Activated T-helper 2 cell treated with anti-CD3 and anti-CD28 coated beads, Interferon-gamma antibody, Interleukin-2, Interleukin-4, amounts not matched to agents 10 μg/mL and 5 μg/mL and 100 μg/mL, durations not matched to agents 14 hours and 24 hours and 36 hours (primary cell): ENCODE measurements at regions of chr21 and their contacts with region 1.

Region 1: DNA sequence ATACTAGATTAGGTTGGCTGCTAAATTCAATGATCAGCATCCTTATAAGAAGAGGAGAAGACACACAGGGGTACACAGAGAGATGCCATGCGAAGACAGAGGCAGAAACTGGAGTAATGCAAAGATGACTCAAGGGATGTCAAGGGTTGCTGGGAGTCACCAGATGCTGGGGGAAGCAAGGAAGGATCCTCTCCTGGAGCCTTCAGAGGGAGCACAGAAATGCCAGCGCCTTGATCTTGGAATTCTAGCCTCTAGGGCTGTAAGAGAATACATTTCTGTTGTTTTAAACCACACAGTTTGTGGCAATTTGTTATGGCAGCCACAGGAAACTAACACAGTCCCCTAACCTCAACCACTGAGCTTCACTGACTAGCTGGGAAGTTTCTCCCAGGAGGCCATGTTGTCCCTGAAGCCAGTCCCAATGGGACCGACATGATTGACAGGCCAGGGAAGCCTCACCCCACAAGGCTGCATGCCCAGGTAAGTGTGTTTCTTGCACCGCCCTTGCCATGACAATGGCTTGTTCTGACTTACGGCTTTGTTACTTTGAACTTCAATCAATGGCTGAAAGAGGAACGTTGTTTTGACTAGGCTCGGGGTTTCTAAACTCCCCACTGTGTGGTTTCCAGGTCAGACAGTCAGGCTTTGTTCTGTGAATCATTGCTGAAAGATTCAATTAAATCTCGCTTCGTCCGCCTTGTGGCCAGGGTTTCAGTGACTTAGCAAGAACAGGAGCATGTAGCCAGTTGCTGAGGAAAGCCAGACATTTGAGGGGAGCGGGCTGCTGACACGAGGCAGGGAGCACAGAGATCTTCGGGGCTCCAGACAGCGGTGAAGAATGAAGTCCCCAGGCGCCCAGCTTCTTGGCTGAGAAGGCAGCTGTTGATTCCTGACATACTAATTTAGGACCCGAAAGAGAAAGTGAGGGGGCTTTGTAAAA is 62.3 kb downstream of the RUNX1 start:
- DNase-seq: peak; percentile 66
- H3K4me3 Mint-ChIP-seq: peak overlapping the region; percentile 75
- H3K27ac Mint-ChIP-seq: peak overlapping the region; percentile 94
- H3K4me1 Mint-ChIP-seq: peaks cover 87% of the 10 kb centered on the region
- H3K27me3 Mint-ChIP-seq: no peaks in the 10 kb centered on the region

Region 2: DNA sequence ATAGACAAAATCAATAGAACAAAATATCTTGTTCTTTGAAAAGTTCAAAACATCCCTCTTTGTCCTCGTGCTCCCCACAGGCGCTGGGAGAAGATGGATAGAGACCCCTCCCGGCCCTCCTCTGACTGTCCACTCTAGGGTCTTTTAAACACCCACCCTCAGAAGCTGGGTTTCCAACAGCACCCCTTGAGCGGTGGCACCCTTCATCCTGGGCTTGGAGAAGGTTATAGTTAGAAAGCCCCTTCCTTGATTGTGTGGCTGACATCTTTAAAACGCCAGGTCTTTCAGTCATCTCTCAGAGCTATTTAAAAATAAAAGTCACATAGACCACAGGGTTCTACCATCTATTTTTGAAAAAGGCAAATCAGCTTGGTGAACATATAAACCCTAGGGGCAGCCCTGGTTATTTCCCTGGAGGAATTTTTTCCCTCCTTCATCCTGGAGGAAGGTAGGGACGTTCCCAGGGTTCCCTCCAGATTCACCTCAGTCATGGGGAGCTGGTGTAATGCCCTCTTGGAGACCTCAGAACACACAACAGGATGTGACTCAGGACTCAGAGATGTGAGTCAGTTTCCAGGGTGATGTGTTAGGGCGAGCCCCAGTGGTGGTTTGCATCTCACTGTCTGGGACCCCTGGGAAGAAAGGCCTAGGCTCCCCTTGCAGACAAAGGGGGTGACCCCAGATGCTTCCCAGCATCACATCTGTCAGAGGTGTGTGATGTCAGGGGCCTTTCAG is 179.5 kb before region 1 on chr21:
- intact Hi-C with region 1: loop called (anchors 10 kb)
- DNase-seq: peak; percentile 44
- H3K4me3 Mint-ChIP-seq: no peak overlapping the region
- H3K27ac Mint-ChIP-seq: peak overlapping the region; percentile 89
- H3K4me1 Mint-ChIP-seq: peaks cover 83% of the 10 kb centered on the region
- H3K27me3 Mint-ChIP-seq: no peaks in the 10 kb centered on the region

Region 3: DNA sequence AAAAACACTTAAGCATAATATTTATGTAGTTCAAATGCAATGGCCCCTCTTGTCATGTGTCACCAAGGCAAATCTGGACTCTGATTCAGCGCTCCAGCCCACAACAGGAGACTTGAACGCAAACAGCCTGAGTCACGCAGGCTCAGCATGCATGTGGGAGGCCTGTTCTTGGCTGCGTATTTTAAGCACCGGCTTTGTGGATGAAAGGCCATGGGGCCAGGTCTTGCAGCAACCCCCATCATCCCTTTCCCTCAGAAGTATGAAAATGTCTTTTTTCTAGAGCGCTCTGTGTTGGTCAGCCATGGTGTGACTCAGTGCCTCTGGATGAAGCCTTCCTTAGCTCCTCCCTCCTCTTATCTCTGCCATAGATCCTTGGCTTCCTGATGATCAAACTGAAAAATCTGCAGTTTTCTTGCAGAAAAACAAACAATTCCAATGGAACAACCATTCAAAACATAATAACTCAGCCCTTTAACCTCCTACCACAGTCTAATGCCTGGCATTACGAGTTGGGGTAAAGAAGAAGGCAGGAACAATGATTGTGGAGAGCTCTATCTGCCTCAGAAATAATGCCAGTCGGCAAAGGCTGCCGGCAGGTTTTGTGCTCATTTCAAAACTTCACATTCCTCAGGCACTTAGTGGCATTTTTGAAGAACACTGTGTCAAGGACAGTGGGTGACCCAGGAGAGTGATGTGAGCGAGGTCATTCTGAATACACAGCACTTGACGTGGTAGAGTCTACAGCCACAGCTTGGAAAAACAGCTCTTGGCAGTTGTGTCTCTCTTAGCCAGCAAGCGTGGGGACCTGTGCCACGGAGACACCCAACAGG is 150.5 kb before region 1 on chr21:
- intact Hi-C with region 1: no loop called
- DNase-seq: no peak
- H3K4me3 Mint-ChIP-seq: no peak overlapping the region
- H3K27ac Mint-ChIP-seq: peak overlapping the region; percentile 79
- H3K4me1 Mint-ChIP-seq: peaks cover 52% of the 10 kb centered on the region
- H3K27me3 Mint-ChIP-seq: no peaks in the 10 kb centered on the region

Region 4: DNA sequence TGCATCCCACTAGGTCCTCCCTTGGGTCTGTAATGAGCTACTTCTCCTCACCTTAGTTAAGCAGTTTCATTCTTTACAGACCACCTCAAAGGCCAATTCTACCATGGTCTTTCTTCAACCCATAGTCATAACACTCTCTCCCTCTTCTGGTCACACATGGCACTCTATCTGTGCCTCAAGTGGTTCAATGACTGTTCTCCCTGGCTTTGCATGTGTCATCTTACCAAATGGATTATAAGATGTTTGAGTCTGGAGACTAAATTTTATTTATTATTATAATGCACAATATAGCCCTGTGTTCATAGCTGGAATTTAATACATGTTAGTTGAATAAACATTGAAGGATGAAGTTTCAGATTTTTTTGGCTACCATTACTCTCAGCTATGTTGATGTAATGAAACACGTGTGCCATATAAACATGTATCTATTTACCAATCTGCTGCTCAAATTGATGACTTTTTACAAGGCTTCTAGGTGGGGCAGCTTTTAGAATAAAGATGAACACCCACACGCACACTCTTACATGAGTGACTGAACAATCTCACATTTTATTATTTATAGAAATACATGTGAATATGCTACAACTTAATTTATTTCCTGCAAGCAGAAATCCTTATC is 39.8 kb before region 1 on chr21:
- intact Hi-C with region 1: loop called (anchors 1 kb)
- DNase-seq: no peak
- H3K4me3 Mint-ChIP-seq: no peak overlapping the region
- H3K27ac Mint-ChIP-seq: peak overlapping the region; percentile 83
- H3K4me1 Mint-ChIP-seq: peaks cover 80% of the 10 kb centered on the region
- H3K27me3 Mint-ChIP-seq: no peaks in the 10 kb centered on the region

Region 5: GRCh38 chr21:35002879-35003722 is 16.3 kb after region 1 on chr21:
- intact Hi-C with region 1: loop called (anchors 1 kb)
- DNase-seq: no peak
- H3K4me3 Mint-ChIP-seq: no peak overlapping the region
- H3K27ac Mint-ChIP-seq: peak overlapping the region; percentile 66
- H3K4me1 Mint-ChIP-seq: peaks cover 81% of the 10 kb centered on the region
- H3K27me3 Mint-ChIP-seq: no peaks in the 10 kb centered on the region

Region 6: DNA sequence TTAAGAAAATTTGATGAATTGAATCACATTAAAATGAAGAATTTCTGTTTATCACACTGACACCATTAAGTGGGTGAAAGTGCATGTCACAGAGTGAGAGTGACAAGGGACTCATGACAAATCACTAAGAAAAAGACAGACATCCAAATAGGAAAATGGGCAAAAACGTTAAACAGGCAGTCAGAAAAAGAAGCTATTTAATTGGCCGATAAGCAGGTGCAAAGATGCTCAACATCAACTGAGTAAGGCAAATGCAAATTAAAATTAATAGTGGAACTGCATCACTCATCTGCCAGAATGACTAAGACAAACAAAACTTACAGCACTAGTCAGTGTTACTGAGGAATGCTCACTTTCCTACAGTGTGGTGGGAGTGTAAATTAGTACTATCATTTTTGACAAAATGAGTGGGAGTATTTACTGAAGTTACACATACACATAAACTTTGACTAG is 101.5 kb after region 1 on chr21:
- intact Hi-C with region 1: loop called (anchors 1 kb)
- DNase-seq: no peak
- H3K4me3 Mint-ChIP-seq: no peak overlapping the region
- H3K27ac Mint-ChIP-seq: peak overlapping the region; percentile 85
- H3K4me1 Mint-ChIP-seq: peaks cover 52% of the 10 kb centered on the region
- H3K27me3 Mint-ChIP-seq: no peaks in the 10 kb centered on the region

Region 7: GRCh38 chr21:35342440-35342839 is 355.6 kb after region 1 on chr21:
- intact Hi-C with region 1: loop called (anchors 5 kb)
- DNase-seq: no peak
- H3K4me3 Mint-ChIP-seq: peak overlapping the region; percentile 69
- H3K27ac Mint-ChIP-seq: peak overlapping the region; percentile 98
- H3K4me1 Mint-ChIP-seq: peaks cover 63% of the 10 kb centered on the region
- H3K27me3 Mint-ChIP-seq: no peaks in the 10 kb centered on the region